ENCODE measurements at regions of chr11 and their contacts with region 1.

Region 1: GRCh38 chr11:10770626-10771254 is 19.7 kb downstream of the CTR9 start:
- DNase-seq: peak; percentile 29
- ATAC-seq: peak; percentile 80
- H3K4me3 ChIP-seq: no peak overlapping the region
- H3K27ac ChIP-seq: no peak overlapping the region; the same call in 1 of the 2 replicates
- H3K4me1 ChIP-seq: no peaks in the 10 kb centered on the region
- H3K27me3 ChIP-seq: no peaks in the 10 kb centered on the region
- CTCF ChIP-seq: peak; percentile 57 to 89 (median 84); a peak in 5 of 6 replicates
- POLR2A ChIP-seq: no peak
- RAD21 ChIP-seq: peak; percentile 66

Region 2: DNA sequence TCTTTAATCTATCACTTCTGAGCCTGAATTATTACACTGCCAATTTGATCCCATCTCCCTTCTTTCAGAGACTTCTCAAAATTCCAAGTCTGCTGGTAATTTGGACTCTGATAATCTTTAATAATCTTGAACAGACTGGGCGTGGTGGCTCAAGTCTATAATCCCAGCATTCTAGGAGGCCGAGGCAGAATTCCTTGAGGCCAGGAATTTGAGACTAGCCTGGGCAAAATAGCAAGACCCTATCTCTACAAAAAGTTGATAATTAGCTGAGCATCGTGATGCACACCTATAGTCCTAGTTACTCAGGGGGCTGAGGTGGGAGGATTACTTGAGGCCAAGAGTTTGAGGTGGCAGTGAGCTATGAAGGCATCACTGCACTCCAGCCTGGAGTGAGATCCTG is 70.9 kb after region 1 on chr11:
- CTCF ChIA-PET with region 1: no interaction called
- POLR2A ChIA-PET with region 1: no interaction called
- RAD21 ChIA-PET with region 1: no interaction called
- intact Hi-C with region 1: no loop called
- DNase-seq: no peak
- ATAC-seq: no peak
- H3K4me3 ChIP-seq: no peak overlapping the region
- H3K27ac ChIP-seq: no peak overlapping the region
- H3K4me1 ChIP-seq: peaks cover 0 to 5% of the 10 kb centered on the region in 2 experiments; a peak in 1 of 4 replicates
- H3K27me3 ChIP-seq: no peaks in the 10 kb centered on the region
- CTCF ChIP-seq: no peak
- POLR2A ChIP-seq: no peak
- RAD21 ChIP-seq: no peak

Region 3: DNA sequence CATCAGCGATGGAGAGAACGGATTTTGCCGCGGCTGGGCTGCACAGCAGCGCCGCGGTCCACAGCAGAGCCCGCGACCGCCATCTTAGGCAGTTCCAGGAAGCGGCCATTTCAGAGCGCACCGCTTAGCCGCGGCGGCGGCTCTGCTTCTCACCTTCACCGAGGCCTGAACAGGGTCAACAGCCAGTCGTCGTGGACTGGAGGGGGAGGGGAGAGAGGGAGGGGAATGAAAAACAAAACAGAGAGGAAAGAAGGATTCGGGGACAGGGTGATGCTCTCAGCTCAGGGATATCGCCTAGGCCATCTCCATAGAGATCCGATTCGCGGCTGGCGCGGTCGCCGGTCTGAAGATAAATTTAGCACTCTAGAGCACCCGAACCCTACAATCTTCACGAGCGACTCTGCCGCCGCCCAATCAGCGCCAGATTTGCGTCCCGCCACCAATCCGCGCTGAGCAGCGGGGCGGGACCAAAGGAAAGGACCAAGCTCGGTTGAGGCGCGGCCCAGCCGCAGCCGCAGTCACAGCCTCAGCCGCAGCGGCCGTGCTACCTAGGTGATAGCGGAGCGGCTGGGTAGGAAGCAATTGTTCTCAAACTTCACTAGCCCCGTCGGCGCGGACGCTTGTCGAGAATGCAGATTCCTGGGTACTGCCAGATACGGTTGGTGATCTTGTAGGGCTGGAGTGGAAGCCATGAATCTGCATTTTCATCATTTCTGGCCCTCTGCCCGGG is 87.1 kb after region 1 on chr11 and contains the start of gene ZBED5:
- CTCF ChIA-PET with region 1: no interaction called
- POLR2A ChIA-PET with region 1: no interaction called
- RAD21 ChIA-PET with region 1: no interaction called
- intact Hi-C with region 1: no loop called
- DNase-seq: peak; percentile 94
- ATAC-seq: peak; percentile 92
- H3K4me3 ChIP-seq: peak within 1 kb of the TSS; percentile 86 to 91
- H3K27ac ChIP-seq: peak within 1 kb of the TSS; percentile 91
- H3K4me1 ChIP-seq: peaks cover 0 to 21% of the 10 kb centered on the region in 2 experiments; a peak in 2 of 4 replicates
- H3K27me3 ChIP-seq: no peaks in the 10 kb centered on the region
- CTCF ChIP-seq: no peak
- POLR2A ChIP-seq: peak; percentile 84
- RAD21 ChIP-seq: peak; percentile 31; the same call in 1 of the 2 replicates
- total RNA-seq, gene ZBED5: 26.8 TPM

Region 4: GRCh38 chr11:11022125-11022730 is 251.5 kb after region 1 on chr11:
- CTCF ChIA-PET with region 1: interaction called, 9 read pairs
- POLR2A ChIA-PET with region 1: no interaction called
- RAD21 ChIA-PET with region 1: interaction called in 1 of 2 experiments, 4 read pairs
- intact Hi-C with region 1: loop called (anchors 5 kb)
- DNase-seq: peak; percentile 12
- ATAC-seq: peak; percentile 72
- H3K4me3 ChIP-seq: no peak overlapping the region
- H3K27ac ChIP-seq: no peak overlapping the region
- H3K4me1 ChIP-seq: 0 out of 4 replicates have a peak, but pooled peaks cover 0 to 3% of the 10 kb centered on the region in 2 experiments
- H3K27me3 ChIP-seq: no peaks in the 10 kb centered on the region
- CTCF ChIP-seq: peak; percentile 21 to 62 (median 45); a peak in 4 of 6 replicates
- POLR2A ChIP-seq: no peak
- RAD21 ChIP-seq: peak; percentile 78

Measured in HCT116 (cell line).